Aorta (tissue), 5 donors: ENCODE measurements at regions of chr17 and their contacts with region 1.

Region 1: GRCh38 chr17:81484195-81484979 is 28.2 kb downstream of the ACTG1 start:
- DNase-seq: peak; percentile 93 to 96
- ATAC-seq: peak; percentile 89
- H3K4me3 ChIP-seq: no peak overlapping the region
- H3K27ac ChIP-seq: no peak overlapping the region
- H3K4me1 ChIP-seq: no peaks in the 10 kb centered on the region
- H3K27me3 ChIP-seq: peaks cover 0 to 2% of the 10 kb centered on the region in 2 donors

Region 2: DNA sequence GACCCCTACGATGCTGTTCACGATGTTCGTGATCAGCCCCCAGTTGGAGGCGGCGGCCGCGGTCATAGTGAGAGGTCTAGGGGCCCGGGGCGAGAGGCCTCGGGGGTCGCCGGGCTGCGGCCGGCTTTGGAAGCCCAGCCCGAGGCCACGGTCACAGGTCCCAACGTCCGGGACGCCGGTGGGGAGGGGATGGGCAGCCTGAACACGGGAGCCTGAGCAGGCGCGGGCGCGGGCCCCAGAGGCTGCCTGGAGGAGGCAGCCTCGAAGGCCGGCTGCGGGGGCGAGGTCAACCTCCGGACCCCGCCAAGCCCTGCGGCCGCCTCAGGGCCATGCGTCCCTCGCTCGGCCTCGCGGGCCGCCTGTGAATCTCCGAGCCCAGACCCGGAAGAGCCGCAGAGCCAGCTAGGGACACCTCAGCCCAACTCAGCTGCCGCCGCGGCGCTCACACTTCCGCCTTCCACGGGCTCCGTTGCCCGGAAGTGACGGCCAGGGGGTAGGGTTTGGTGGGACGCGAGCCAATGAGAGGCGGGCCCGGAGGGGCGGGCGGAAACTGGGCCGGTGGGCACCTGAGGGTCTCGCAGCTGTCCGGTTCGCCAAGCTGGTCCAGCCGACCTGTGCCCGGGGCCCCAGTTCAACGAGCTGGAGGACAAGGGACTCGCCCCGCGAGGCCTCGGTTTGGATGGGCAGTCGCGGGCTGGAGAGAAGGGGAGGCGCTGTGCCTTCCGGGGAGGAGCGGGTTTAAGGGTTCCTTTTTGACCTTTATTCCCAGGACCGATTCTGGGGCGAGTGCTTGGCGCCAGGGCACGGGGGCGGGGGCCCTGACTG is 189.3 kb before region 1 on chr17 and contains the start of gene SLC38A10:
- intact Hi-C with region 1: loop called in 1 of 2 experiments (anchors 2 kb)
- DNase-seq: peak; percentile 95 to 98
- ATAC-seq: peak; percentile 95
- H3K4me3 ChIP-seq: peak within 1 kb of the TSS; percentile 38 to 71
- H3K27ac ChIP-seq: peak within 1 kb of the TSS; percentile 1 to 59
- H3K4me1 ChIP-seq: no peaks in the 10 kb centered on the region
- H3K27me3 ChIP-seq: no peaks in the 10 kb centered on the region
- total RNA-seq, gene SLC38A10: 61.9 to 79.6 TPM

Region 3: GRCh38 chr17:81401723-81402529 is 82.5 kb before region 1 on chr17:
- intact Hi-C with region 1: loop called in 1 of 2 experiments (anchors 5 kb)
- DNase-seq: no peak
- ATAC-seq: no peak
- H3K4me3 ChIP-seq: no peak overlapping the region
- H3K27ac ChIP-seq: peak overlapping the region; percentile 60 to 87
- H3K4me1 ChIP-seq: peaks cover 0 to 4% of the 10 kb centered on the region in 2 donors
- H3K27me3 ChIP-seq: no peaks in the 10 kb centered on the region

Region 4: DNA sequence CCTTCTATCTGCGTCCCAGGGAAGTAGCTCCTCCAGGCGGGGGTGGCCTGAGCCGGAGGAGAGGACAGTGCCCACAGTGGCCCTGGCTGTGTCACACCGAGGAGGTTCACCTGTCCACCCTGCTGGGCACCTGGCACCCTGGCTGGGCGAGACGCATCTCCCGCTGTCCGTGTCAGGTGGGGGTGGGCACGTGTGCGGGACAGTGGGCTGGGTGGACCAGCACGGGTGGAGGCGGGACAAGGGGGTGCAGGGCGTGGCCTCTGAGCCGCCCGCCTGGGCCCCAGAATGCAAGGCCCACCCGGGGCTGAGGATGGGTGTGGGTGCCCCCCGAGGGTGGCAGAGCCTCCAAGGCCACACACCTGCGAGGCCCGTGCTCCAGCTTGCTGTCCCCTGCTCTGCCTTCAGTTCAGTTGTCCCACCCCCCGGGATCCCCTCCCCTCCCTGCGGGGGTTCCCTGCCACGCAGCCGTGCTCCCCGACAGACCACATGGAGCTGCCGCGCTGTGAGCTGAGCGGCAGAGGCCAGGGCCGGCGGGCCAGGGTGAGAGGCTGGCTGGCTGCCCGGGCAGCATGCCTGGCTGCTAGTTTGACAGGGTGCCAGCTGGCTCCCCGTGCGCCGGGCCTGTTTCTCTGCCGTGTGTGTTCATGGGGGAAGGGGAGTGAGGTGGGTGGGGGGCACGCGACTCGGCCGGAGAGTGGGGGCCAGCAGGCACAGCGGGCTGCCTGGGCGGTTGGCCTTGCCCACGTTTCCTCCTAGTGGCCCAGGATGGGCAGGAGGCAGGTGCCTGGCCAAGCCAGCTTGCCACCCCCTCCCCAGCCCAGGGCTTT is 55.2 kb before region 1 on chr17:
- intact Hi-C with region 1: loop called in 1 of 2 experiments (anchors 2 kb)
- DNase-seq: peak; percentile 82 to 94
- ATAC-seq: peak; percentile 81
- H3K4me3 ChIP-seq: no peak overlapping the region
- H3K27ac ChIP-seq: no peak overlapping the region
- H3K4me1 ChIP-seq: no peaks in the 10 kb centered on the region
- H3K27me3 ChIP-seq: no peaks in the 10 kb centered on the region